ENCODE measurements at regions of chr3 and their contacts with region 1.

Region 1: DNA sequence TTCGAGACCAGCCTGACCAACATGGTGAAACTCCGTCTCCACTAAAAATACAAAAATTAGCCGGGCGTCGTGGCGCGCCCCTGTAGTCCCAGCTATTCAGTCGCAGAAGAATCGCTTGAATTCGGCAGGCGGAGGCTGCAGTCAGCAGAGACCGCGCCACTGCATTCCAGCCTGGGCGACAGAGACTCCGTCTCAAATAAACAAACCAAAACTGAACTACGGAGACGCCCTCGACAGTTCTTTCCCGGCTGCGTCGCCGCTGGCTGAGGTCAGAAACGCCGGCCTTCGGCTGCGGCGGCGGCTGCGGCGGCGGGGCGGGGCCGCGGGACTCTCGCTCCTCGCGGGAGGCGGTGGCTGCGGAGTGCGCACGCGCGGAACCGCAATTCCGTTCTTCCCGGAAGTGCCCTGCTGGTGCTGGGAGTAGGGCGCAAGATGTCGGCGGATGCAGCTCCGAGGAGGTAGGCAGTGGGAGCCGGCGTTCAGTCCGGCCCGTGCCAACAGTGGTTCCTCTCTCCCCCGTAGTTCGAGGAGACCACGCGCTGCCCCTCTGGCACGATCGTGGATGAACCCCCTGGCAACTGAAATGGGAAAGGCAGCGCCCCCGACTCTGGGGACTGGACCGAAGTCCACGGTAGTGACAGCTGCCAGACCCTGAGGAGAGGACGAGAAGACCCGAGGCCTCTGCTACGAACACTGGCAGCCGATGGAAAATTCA is 49.5 kb downstream of the TMEM44 start:
- DNase-seq: peak; percentile 99
- CTCF ChIP-seq: no peak

Region 2: GRCh38 chr3:194333212-194333980 is 250.4 kb before region 1 on chr3:
- in situ Hi-C with region 1: loop called (anchors 10 kb)
- DNase-seq: peak; percentile 87
- CTCF ChIP-seq: peak; percentile 99

Region 3: DNA sequence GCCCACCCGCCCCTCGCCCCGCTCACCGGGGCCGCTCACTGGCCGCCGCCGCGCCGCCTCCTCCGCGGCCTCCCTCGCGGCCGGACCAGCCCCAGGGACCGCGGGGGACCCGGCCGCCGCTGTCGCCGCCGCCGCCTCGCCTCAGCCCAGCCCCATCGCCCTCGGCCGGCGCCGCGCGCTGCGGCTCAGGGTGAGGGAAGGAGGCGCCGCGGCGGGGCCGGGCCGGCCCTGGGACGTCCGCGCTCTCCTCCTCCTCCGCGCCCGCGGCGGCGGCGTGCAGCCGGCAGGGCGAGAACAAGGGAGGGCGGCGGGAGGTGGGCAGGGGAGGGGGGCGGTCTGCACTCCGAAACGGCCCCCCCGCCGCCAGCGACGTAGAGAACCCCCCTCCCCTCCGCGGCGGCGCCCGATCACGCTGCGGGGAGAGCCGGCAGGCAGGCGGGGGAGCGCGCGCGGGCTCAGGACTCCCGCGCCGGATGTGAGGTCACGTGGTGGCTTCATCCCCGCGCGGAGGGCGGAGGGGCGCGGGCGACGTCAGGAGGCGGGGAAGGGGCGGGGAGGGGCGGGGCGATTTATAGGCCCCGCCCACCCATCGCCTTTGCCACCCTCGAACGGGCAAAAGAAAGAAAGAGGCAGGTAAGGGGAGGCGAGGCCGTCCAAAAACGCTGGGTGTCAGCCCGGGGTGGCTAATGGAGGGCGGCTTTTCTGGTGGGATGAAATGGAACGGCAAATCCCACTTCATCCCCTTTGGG is 97.0 kb before region 1 on chr3 and contains the start of gene ATP13A3:
- in situ Hi-C with region 1: loop called (anchors 10 kb)
- DNase-seq: peak; percentile 98
- CTCF ChIP-seq: no peak

Region 4: DNA sequence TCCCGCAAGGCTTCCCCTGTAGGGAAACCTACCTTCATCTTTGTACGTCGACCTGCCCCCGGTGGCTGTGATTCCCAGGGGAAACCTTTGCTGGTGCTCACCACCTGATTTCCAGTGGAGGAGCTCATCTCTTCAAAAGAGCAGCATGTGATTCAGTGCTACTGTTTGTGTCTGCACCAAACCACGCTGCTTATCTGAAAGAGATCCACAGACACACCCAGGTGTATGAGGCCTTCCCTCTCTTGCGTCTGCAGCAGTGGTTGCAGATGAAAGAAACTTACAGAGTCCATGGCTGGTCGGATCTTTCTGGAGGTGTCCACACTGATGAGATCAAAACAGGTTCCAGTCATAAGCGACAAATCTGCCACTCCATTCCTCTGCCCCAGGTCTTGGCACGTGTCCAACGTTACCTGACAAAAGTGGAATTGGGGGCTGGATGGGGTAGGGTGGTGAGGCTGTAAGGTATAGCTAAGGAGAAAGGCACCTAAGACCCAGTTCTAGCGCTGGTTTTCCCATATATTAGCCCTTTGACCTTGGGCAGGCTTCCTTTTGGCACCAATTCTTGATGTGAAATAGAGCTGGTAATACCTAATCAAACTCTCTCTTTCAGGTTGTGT is 112.8 kb after region 1 on chr3:
- in situ Hi-C with region 1: no loop called
- DNase-seq: no peak
- CTCF ChIP-seq: no peak

Measured in GM13977 (cell line).